ENCODE measurements at regions of chr4 and their contacts with region 1.

Region 1: GRCh38 chr4:88320780-88321373 is 36.5 kb upstream of the PPM1K start:
- DNase-seq: peak; percentile 54
- ATAC-seq: peak; percentile 95
- H3K4me3 Mint-ChIP-seq: peak overlapping the region; percentile 88
- H3K27ac Mint-ChIP-seq: peak overlapping the region; percentile 98
- H3K4me1 Mint-ChIP-seq: peaks cover 23% of the 10 kb centered on the region
- H3K27me3 Mint-ChIP-seq: no peaks in the 10 kb centered on the region

Region 2: DNA sequence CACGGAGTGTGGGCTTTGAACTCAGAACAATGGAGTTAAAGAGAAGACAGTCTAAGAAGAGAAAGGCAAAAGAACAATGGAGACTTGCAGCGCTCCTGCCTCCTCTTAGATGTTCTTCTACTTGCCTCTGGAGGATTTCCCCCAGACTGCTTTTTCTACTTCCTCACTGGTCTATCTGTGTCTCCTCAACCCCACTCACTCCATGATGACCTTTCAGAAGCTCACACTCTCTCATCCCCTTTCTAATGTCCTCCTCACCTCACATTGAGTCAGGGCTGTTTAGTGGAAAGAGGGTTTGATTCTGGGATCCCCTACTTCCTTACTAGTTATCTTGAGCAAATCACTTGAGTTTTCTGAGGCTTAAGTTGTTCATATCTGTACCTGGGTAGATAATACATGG is 45.6 kb after region 1 on chr4:
- POLR2A ChIA-PET with region 1: no interaction called
- DNase-seq: no peak
- ATAC-seq: no peak
- H3K4me3 Mint-ChIP-seq: no peak overlapping the region
- H3K27ac Mint-ChIP-seq: no peak overlapping the region
- H3K4me1 Mint-ChIP-seq: peaks cover 7% of the 10 kb centered on the region
- H3K27me3 Mint-ChIP-seq: no peaks in the 10 kb centered on the region

Region 3: DNA sequence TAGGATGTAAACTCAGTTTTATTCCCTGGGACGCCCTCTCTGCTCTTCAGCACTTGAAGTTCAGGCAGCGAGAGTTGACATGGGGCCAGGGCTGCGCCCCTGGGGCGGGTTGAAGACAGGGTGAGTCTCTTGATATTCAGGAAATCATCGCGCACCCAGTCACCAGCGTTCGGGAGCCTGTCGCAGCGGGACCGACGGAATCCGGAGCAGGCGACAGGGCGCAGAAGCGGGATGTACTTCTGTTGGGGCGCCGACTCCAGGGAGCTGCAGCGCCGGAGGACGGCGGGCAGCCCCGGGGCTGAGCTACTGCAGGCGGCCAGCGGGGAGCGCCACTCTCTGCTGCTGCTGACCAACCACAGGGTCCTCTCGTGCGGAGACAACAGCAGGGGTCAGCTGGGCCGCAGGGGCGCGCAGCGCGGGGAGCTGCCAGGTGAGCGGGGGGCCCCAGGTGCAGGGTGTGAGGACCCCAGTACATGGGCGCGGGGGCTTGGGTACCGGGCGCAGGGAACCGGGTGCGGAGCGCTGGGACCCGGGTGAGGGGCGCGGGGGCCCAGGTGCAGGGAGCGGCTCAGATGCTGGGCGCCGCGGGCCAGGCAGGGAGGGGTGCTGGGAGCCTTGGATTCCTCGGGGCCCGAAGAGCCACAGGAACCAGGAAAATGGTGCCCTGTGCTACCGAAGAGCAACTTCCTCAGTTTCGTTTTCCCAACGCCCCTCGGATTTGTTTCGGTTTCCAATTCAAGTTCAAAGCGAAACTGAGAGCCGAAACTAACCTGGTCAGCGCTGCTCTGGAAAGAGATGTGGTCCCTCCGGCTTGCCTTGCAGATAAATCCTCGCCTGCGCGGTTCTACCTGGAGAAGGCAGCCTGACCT is 58.0 kb after region 1 on chr4 and contains the start of gene HERC6:
- POLR2A ChIA-PET with region 1: interaction called, 17 read pairs
- DNase-seq: peak; percentile 83
- ATAC-seq: peak; percentile 58
- H3K4me3 Mint-ChIP-seq: peak within 1 kb of the TSS; percentile 91
- H3K27ac Mint-ChIP-seq: peak within 1 kb of the TSS; percentile 96
- H3K4me1 Mint-ChIP-seq: peaks cover 48% of the 10 kb centered on the region
- H3K27me3 Mint-ChIP-seq: no peaks in the 10 kb centered on the region
- total RNA-seq, gene HERC6: 36.0 to 36.5 TPM

Measured in activated naive CD8-positive, alpha-beta T cell treated with anti-CD3 and anti-CD28 coated beads, Interleukin-2, amount 10 ng/mL, durations not matched to agents 7 days and 5 days (primary cell).